Endothelial cell of umbilical vein (primary cell): ENCODE measurements at regions of chr13 and their contacts with region 1.

Region 1: DNA sequence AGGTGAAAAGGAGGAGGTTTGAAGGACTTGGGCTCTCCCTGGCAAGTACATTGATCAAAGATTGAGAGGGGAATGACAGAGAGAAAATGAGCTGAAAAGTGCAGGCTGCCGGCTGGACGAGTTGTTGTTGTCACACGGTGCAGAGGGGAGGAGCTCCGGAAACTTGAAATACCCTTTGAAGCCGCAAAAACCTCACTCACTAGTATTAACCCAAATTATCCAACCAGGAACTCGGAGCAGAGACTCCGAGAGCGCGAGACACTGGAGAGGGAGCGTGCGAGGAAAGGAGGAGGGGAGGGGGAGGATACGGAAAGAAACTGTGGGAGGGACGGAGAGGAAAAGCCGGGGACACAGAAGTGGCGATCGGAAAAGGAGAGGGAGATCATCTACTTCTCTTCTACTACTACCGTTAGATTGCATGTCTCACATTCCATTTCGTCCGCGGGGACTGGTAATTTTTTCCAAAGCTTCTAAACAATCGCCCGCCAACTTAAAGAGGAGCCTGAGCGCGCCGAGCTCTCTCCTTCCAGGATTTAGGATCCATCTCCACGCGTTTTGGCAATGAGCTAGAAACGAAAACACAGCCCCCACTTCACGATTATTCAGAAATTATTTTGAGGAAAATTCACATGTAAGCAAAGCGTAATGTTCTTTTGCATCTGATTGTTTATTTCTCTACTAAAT is at the start of gene DACH1:
- DNase-seq: peak; percentile 93
- H3K4me3 ChIP-seq: peak within 1 kb of the TSS; percentile 75 to 98 (median 95)
- H3K27ac ChIP-seq: peak within 1 kb of the TSS; percentile 48
- H3K4me1 ChIP-seq: peaks cover 3% of the 10 kb centered on the region
- H3K27me3 ChIP-seq: peaks cover 0 to 4% of the 10 kb centered on the region in 2 experiments
- CTCF ChIP-seq: no peak
- POLR2A ChIP-seq: peak; percentile 20
- total RNA-seq, gene DACH1: 24.0 and 28.3 TPM in 2 replicates

Region 2: DNA sequence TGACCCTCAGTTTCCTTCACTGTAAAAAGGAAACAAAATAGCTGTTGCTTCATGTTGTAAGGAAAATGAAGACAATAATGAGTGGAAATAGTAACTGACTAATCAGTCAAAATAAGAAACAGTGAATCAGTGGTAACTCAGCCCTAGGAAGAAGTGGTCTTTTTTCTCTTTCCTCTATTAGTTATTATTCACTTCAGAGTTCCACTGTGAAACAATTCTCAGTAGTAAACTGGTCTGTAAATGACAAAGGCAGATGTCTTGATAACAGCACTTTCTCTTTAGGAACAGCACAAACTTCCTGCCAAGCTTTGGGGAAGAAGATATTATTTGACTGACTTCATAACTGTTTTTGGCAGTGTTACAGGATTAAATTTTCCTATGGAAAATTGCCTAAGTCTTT is 1158.5 kb before region 1 on chr13:
- CTCF ChIA-PET with region 1: no interaction called
- POLR2A ChIA-PET with region 1: no interaction called
- dilution Hi-C with region 1: no loop called
- intact Hi-C with region 1: loop called (anchors 10 kb)
- DNase-seq: peak; percentile 93
- H3K4me3 ChIP-seq: peak overlapping the region in 1 of 3 experiments; percentile 11
- H3K27ac ChIP-seq: peak overlapping the region; percentile 53
- H3K4me1 ChIP-seq: peaks cover 28% of the 10 kb centered on the region
- H3K27me3 ChIP-seq: no peaks in the 10 kb centered on the region
- CTCF ChIP-seq: no peak
- POLR2A ChIP-seq: no peak

Region 3: DNA sequence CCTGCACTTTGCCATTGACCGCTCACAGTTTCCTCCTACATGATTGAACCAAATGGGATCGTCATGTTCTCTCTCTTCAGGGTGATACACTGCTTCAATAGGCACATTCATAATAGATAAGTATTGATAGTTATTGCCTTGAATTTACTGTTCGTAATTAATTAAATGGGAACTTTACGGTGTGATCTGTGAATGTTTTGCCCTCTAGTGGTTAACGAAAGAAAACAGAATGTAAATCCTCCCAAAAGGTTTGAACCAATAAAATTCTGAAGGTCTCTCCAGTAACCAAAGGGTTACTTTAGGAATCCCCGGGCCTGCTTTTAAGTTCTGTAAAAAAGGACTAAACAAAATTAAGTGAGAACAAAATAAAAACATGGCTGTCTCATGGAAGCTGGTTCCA is 389.5 kb before region 1 on chr13:
- CTCF ChIA-PET with region 1: no interaction called
- POLR2A ChIA-PET with region 1: no interaction called
- dilution Hi-C with region 1: no loop called
- intact Hi-C with region 1: loop called (anchors 5 kb)
- DNase-seq: no peak
- H3K4me3 ChIP-seq: no peak overlapping the region
- H3K27ac ChIP-seq: no peak overlapping the region
- H3K4me1 ChIP-seq: no peaks in the 10 kb centered on the region
- H3K27me3 ChIP-seq: no peaks in the 10 kb centered on the region
- CTCF ChIP-seq: peak; percentile 13 to 23
- POLR2A ChIP-seq: no peak

Region 4: DNA sequence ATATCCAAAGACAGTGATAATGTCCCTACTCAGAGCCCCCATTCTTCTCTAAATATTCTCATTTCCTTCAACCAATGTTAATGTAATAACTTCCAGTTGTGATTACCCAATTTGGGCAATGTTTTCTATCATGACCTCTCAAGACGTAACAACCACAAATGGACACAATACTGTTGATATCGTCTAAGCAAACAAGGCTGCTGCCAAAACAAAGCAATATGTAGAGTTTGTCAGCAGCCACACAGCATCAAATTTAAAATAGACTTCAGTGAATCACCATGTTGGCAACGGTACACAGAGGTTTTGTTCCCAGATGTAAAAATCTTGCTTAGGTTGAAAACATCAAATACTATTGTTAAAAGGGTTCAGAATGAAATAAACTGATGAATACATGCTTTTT is 205.4 kb before region 1 on chr13:
- CTCF ChIA-PET with region 1: no interaction called
- POLR2A ChIA-PET with region 1: no interaction called
- dilution Hi-C with region 1: no loop called
- intact Hi-C with region 1: loop called (anchors 5 kb)
- DNase-seq: peak; percentile 92
- H3K4me3 ChIP-seq: no peak overlapping the region
- H3K27ac ChIP-seq: no peak overlapping the region
- H3K4me1 ChIP-seq: peaks cover 15% of the 10 kb centered on the region
- H3K27me3 ChIP-seq: no peaks in the 10 kb centered on the region
- CTCF ChIP-seq: no peak
- POLR2A ChIP-seq: no peak

Region 5: GRCh38 chr13:71672512-71672911 is 194.8 kb before region 1 on chr13:
- CTCF ChIA-PET with region 1: no interaction called
- POLR2A ChIA-PET with region 1: no interaction called
- dilution Hi-C with region 1: no loop called
- intact Hi-C with region 1: no loop called
- DNase-seq: no peak
- H3K4me3 ChIP-seq: no peak overlapping the region
- H3K27ac ChIP-seq: no peak overlapping the region
- H3K4me1 ChIP-seq: no peaks in the 10 kb centered on the region
- H3K27me3 ChIP-seq: no peaks in the 10 kb centered on the region
- CTCF ChIP-seq: no peak
- POLR2A ChIP-seq: no peak

Region 6: GRCh38 chr13:71831716-71832115 is 35.6 kb before region 1 on chr13:
- CTCF ChIA-PET with region 1: no interaction called
- POLR2A ChIA-PET with region 1: no interaction called
- dilution Hi-C with region 1: no loop called
- intact Hi-C with region 1: no loop called
- DNase-seq: no peak
- H3K4me3 ChIP-seq: no peak overlapping the region
- H3K27ac ChIP-seq: no peak overlapping the region
- H3K4me1 ChIP-seq: no peaks in the 10 kb centered on the region
- H3K27me3 ChIP-seq: no peaks in the 10 kb centered on the region
- CTCF ChIP-seq: no peak
- POLR2A ChIP-seq: no peak

Region 7: GRCh38 chr13:71879129-71879535 is 11.9 kb after region 1 on chr13:
- CTCF ChIA-PET with region 1: interaction called, 25 read pairs
- POLR2A ChIA-PET with region 1: no interaction called
- dilution Hi-C with region 1: no loop called
- intact Hi-C with region 1: no loop called
- DNase-seq: peak; percentile 75
- H3K4me3 ChIP-seq: no peak overlapping the region
- H3K27ac ChIP-seq: no peak overlapping the region
- H3K4me1 ChIP-seq: no peaks in the 10 kb centered on the region
- H3K27me3 ChIP-seq: no peaks in the 10 kb centered on the region
- CTCF ChIP-seq: peak; percentile 39 to 61
- POLR2A ChIP-seq: no peak